ENCODE measurements at regions of chr21 and their contacts with region 1.

Region 1: GRCh38 chr21:20999659-21000058 is 1.4 kb downstream of the NCAM2 start:
- DNase-seq: peak in 1 of 2 donors; percentile 34
- ATAC-seq: peak in 7 of 8 donors; percentile 39 to 77 (median 58)
- H3K4me3 ChIP-seq: peak overlapping the region in 4 of 10 donors; percentile 3 to 66 (median 64)
- H3K27ac ChIP-seq: no peak overlapping the region
- H3K4me1 ChIP-seq: peaks cover 0 to 21% (median 13%) of the 10 kb centered on the region in 9 donors
- H3K27me3 ChIP-seq: peaks cover 4 to 34% (median 17%) of the 10 kb centered on the region in 7 donors
- CTCF ChIP-seq: peak; percentile 31 to 83 (median 65)

Region 2: GRCh38 chr21:20570824-20571232 is 428.8 kb before region 1 on chr21:
- intact Hi-C with region 1: no loop called
- DNase-seq: no peak
- ATAC-seq: no peak
- H3K4me3 ChIP-seq: no peak overlapping the region
- H3K27ac ChIP-seq: no peak overlapping the region
- H3K4me1 ChIP-seq: no peaks in the 10 kb centered on the region
- H3K27me3 ChIP-seq: no peaks in the 10 kb centered on the region
- CTCF ChIP-seq: no peak

Region 3: DNA sequence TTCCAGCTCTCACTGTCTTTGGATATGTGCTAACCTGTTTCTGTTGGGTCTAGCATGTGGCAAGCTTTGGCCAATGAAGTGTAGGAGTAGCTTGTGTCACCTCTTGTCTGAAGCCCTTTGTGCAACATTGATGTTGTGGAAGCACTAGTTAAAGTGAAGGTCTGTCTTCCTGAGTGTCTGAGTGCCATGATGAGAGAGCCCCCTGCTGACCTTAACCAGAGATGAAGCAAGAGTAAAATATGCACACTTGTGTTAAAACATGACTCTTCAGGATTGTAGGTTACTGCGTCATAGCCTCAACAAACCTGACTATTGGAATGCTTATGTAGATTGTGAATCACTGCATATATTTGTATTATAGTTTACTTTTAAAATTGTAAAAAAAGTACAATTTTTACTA is 102.3 kb after region 1 on chr21:
- intact Hi-C with region 1: loop called in 6 of 10 experiments (anchors 5 to 10 kb)
- DNase-seq: no peak
- ATAC-seq: peak in 2 of 8 donors; percentile 53 to 60
- H3K4me3 ChIP-seq: no peak overlapping the region
- H3K27ac ChIP-seq: no peak overlapping the region
- H3K4me1 ChIP-seq: no peaks in the 10 kb centered on the region
- H3K27me3 ChIP-seq: no peaks in the 10 kb centered on the region
- CTCF ChIP-seq: peak in 6 of 9 donors; percentile 31 to 43 (median 38)

Region 4: GRCh38 chr21:21109736-21110135 is 110.1 kb after region 1 on chr21:
- intact Hi-C with region 1: loop called in 6 of 10 experiments (anchors 5 to 10 kb)
- DNase-seq: no peak
- ATAC-seq: no peak
- H3K4me3 ChIP-seq: no peak overlapping the region
- H3K27ac ChIP-seq: no peak overlapping the region
- H3K4me1 ChIP-seq: peaks cover 0 to 3% (median 0%) of the 10 kb centered on the region in 9 donors
- H3K27me3 ChIP-seq: no peaks in the 10 kb centered on the region
- CTCF ChIP-seq: no peak

Region 5: DNA sequence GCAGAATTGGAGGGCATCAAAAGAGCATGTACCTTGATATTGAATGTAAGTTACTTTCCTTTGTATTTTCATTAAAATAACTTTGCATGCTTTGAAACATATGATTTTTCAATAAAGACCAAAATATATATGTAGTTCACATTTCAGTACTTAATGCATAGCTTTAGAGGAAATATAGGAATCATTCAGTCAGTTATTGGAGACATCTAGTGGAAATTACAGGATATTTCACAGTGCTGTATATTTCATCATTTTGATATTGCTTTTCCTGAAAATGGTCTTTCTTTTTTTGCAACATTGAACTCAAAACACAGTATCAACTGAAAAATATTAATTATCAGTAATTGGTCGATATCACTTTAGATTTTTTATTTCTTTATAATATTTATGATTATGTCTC is 374.3 kb after region 1 on chr21:
- intact Hi-C with region 1: loop called in 1 of 10 experiments (anchors 10 kb)
- DNase-seq: no peak
- ATAC-seq: no peak
- H3K4me3 ChIP-seq: no peak overlapping the region
- H3K27ac ChIP-seq: no peak overlapping the region
- H3K4me1 ChIP-seq: no peaks in the 10 kb centered on the region
- H3K27me3 ChIP-seq: no peaks in the 10 kb centered on the region
- CTCF ChIP-seq: peak in 3 of 9 donors; percentile 9 to 27 (median 21)

Region 6: DNA sequence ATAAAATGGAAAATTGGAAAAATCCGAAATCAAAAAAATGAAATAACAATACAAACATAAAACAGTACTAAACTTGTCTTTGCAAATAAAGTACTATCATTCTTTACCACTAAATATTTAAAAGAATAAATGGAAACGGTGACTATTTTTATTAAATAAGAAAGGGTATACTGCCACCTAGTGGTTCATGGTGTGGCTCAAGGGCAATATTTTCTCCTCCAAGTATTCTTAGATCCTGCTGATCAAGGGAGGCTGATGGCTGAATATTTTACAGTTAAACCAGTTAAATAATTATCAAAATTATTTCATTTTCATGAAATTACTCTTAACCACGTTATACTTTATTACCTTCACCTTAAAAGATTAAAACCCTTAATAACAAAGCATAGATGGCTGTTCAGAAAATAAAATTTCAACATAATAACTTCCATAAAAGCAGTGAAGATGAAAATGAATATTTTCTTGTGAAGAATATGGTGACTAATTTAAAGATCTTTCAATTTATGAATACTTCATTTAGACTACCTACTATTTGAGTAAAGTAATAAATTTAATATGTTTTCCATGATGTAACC is 1792.4 kb after region 1 on chr21:
- intact Hi-C with region 1: loop called in 5 of 10 experiments (anchors 5 to 10 kb)
- DNase-seq: no peak
- ATAC-seq: no peak
- H3K4me3 ChIP-seq: no peak overlapping the region
- H3K27ac ChIP-seq: no peak overlapping the region
- H3K4me1 ChIP-seq: no peaks in the 10 kb centered on the region
- H3K27me3 ChIP-seq: no peaks in the 10 kb centered on the region
- CTCF ChIP-seq: peak; percentile 52 to 89 (median 82)

Measured in heart right ventricle (tissue), 16 donors.